Endothelial cell of umbilical vein (primary cell): ENCODE measurements at regions of chr2 and their contacts with region 1.

Region 1: DNA sequence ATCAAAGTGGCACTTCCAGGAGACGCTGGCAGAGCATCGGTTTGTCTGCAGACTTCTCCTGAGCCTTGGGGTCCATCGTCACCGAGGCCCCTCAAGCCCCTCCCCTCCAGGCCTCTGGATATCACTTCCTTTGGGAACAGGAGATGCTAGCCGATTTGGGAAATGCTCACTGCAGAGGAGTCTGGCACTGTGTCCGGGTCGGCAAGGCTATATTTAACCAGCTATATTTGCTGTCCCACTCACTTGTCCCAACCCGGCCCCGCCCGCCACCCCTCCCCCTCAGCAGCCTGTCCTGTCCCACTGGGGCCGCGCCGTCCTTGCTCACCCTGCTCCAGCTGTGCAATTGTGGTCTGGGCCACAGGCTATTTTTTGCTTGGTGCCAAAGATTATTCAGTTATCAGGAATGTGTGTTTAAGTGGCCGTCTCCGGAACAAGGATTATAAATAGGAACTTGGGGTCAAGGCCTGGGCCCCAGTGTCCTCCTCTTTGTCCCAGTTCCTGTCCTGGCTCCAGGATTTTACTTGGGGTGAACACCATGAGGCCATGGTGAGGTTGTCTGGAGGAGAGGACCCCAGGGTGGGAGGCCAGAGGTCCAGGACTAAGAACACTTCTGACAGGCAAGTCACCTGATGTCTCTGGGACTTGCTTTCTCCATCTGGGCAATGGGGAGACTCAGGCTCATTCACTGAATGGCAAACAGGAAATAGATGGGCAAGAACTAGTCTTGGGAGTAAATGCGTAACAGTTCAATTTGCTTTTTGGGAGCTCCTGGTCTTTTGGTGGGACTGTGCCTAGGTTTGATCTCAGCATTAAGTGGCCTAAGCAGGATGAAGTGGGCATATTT is 263.6 kb downstream of the DYSF start:
- DNase-seq: peak; percentile 25
- H3K4me3 ChIP-seq: no peak overlapping the region
- H3K27ac ChIP-seq: peak overlapping the region; percentile 48
- H3K4me1 ChIP-seq: peaks cover 15% of the 10 kb centered on the region
- H3K27me3 ChIP-seq: peaks cover 0 to 4% of the 10 kb centered on the region in 2 experiments
- CTCF ChIP-seq: no peak
- POLR2A ChIP-seq: no peak

Region 2: DNA sequence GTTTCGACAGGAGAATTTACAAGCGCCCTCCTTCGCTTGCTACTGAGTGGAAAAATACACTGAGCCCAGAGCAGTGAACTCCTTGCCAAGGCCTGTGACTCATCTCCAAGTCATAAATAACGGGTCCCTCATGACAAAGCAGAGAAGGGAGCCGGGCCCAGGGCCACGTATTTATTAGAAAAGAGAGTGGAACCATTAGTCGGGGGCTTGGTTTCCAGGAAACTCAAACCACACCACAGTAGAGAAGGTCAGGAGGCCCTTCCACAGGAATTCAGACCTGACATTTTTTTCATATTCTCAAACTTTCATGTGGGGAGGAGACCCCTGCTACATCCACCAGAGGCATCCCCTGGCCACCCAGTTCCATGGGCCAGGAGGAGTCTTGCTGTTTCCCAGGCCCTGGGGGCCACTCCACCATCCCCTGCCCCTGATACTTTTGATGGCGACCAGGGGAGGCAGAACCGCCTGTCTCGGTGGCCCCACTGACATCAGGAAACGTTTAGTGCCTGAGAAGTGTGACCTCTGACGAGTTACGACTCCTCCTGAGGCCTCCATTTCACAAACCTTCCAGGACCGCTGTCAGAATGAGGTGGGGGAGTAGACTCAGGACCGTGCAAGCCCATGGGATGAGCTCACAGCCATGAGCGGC is 26.1 kb after region 1 on chr2:
- CTCF ChIA-PET with region 1: interaction called, 4 read pairs
- POLR2A ChIA-PET with region 1: no interaction called
- dilution Hi-C with region 1: no loop called
- intact Hi-C with region 1: loop called (anchors 2 kb)
- DNase-seq: peak; percentile 96
- H3K4me3 ChIP-seq: no peak overlapping the region
- H3K27ac ChIP-seq: peak overlapping the region; percentile 72
- H3K4me1 ChIP-seq: peaks cover 40% of the 10 kb centered on the region
- H3K27me3 ChIP-seq: peaks cover 0 to 2% of the 10 kb centered on the region in 2 experiments
- CTCF ChIP-seq: no peak
- POLR2A ChIP-seq: no peak